Activated naive CD8-positive, alpha-beta T cell treated with anti-CD3 and anti-CD28 coated beads, Interleukin-2, amount 10 ng/mL, durations not matched to agents 7 days and 5 days (primary cell): ENCODE measurements at regions of chr20 and their contacts with region 1.

Region 1: GRCh38 chr20:24027229-24027628 is 38.6 kb upstream of the GGTLC1 start:
- DNase-seq: peak; percentile 72
- ATAC-seq: peak; percentile 99
- H3K4me3 Mint-ChIP-seq: peak overlapping the region; percentile 79
- H3K27ac Mint-ChIP-seq: peak overlapping the region; percentile 98
- H3K4me1 Mint-ChIP-seq: peaks cover 33% of the 10 kb centered on the region
- H3K27me3 Mint-ChIP-seq: no peaks in the 10 kb centered on the region

Region 2: GRCh38 chr20:23874747-23875146 is 152.5 kb before region 1 on chr20:
- POLR2A ChIA-PET with region 1: no interaction called
- DNase-seq: no peak
- ATAC-seq: peak; percentile 26
- H3K4me3 Mint-ChIP-seq: no peak overlapping the region
- H3K27ac Mint-ChIP-seq: no peak overlapping the region
- H3K4me1 Mint-ChIP-seq: no peaks in the 10 kb centered on the region
- H3K27me3 Mint-ChIP-seq: no peaks in the 10 kb centered on the region

Region 3: DNA sequence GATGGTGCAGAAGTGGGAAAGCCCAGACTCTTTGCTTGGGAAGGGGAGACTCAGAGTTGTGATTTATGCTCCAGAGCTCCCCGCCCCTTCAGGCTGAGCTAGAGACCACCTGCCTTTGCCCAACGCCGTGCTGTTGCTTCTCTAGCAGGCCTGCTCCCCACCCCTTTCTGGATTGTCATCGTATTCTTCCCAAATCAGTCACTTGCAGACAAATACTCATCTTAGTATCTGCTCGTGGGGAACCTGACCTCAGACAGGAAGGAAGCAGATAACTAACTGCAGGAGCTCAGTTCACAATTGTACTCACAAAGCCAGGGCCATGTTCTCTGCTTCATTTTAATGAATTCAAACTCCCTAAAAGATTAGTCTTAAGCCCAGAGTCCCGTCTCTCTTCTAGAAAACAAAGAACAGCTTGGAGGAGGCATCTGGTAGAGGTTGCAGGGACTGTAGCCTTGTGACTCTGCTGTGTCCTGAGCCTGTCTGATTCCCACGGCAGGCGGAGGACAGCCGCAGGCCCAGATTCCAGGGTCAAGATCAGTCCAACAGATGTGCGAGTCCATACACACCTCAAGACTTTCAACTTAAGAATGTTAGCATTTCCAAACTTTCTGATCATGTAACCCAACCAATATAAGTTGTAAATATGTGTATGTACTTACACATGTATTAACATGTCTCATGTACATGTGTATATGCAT is 18.5 kb after region 1 on chr20:
- POLR2A ChIA-PET with region 1: interaction called, 19 read pairs
- DNase-seq: peak; percentile 40
- ATAC-seq: peak; percentile 97
- H3K4me3 Mint-ChIP-seq: peak overlapping the region; percentile 59
- H3K27ac Mint-ChIP-seq: peak overlapping the region; percentile 72
- H3K4me1 Mint-ChIP-seq: peaks cover 39% of the 10 kb centered on the region
- H3K27me3 Mint-ChIP-seq: no peaks in the 10 kb centered on the region